ENCODE measurements at regions of chr10 and their contacts with region 1.

Region 1: GRCh38 chr10:88880282-88881076 is 434 bp downstream of the STAMBPL1 start:
- DNase-seq: peak; percentile 27 to 90
- H3K4me3 ChIP-seq: peak overlapping the region; percentile 81 to 90
- H3K27ac ChIP-seq: peak overlapping the region; percentile 76 to 85
- H3K4me1 ChIP-seq: peaks cover 0 to 12% of the 10 kb centered on the region in 2 donors
- H3K27me3 ChIP-seq: no peaks in the 10 kb centered on the region
- CTCF ChIP-seq: no peak

Region 2: DNA sequence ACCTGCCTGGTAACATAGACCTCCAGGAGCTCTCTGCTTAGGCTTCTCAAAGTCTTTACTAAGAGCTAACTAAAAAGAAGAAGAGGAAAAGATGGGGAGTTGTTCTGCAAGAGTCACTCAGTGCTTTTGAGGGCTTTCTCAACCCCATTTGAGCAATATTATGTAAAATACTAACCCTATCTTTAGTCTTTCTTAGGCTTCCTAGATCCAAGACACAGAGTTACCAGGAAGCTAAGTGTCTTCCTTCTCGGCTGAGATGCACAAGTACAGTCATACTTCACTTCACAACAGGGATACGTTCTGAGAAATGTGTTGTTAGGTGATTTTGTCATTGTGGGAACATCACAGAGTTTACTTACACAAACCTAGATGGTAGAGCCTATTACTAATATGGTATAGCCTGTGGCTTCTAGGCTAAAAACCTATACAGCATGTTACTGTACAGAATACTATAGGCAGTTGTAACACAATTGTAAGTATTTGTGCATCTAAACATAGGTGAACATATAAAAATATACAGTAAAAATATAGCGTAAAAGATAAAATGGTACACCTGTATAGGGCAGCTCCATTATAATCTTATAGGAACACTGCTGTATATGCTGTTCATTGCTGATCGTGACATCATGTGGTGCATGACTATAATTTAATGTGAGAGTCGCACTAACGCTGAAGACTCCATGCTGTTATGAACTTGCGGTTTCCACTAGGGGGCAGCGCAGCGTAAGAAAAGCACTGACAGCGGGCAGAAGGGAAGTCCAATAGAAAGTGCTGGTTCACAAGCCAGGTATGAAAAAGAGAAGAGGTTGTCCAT is 45.2 kb before region 1 on chr10:
- intact Hi-C with region 1: loop called (anchors 5 kb)
- DNase-seq: peak in 1 of 2 donors; percentile 90
- H3K4me3 ChIP-seq: no peak overlapping the region
- H3K27ac ChIP-seq: no peak overlapping the region
- H3K4me1 ChIP-seq: peaks cover 0 to 3% of the 10 kb centered on the region in 2 donors
- H3K27me3 ChIP-seq: no peaks in the 10 kb centered on the region
- CTCF ChIP-seq: peak; percentile 83 to 85 (median 84)

Region 3: GRCh38 chr10:88932539-88933256 is 52.2 kb after region 1 on chr10:
- intact Hi-C with region 1: loop called (anchors 5 kb)
- DNase-seq: peak; percentile 41 to 87
- H3K4me3 ChIP-seq: no peak overlapping the region
- H3K27ac ChIP-seq: peak overlapping the region; percentile 72 to 88
- H3K4me1 ChIP-seq: peaks cover 0 to 7% of the 10 kb centered on the region in 2 donors
- H3K27me3 ChIP-seq: no peaks in the 10 kb centered on the region
- CTCF ChIP-seq: peak; percentile 82 to 90 (median 89)